H1 (cell line): ENCODE measurements at regions of chr2 and their contacts with region 1.

Region 1: GRCh38 chr2:159226059-159226461 is 60.4 kb downstream of the WDSUB1 start:
- DNase-seq: peak in 1 of 2 experiments; percentile 20
- H3K4me3 ChIP-seq: no peak overlapping the region
- H3K27ac ChIP-seq: no peak overlapping the region
- H3K4me1 ChIP-seq: no peaks in the 10 kb centered on the region
- H3K27me3 ChIP-seq: no peaks in the 10 kb centered on the region; a peak in 1 of 7 replicates
- CTCF ChIP-seq: no peak
- EP300 ChIP-seq: no peak
- POLR2A ChIP-seq: no peak
- RAD21 ChIP-seq: no peak

Region 2: DNA sequence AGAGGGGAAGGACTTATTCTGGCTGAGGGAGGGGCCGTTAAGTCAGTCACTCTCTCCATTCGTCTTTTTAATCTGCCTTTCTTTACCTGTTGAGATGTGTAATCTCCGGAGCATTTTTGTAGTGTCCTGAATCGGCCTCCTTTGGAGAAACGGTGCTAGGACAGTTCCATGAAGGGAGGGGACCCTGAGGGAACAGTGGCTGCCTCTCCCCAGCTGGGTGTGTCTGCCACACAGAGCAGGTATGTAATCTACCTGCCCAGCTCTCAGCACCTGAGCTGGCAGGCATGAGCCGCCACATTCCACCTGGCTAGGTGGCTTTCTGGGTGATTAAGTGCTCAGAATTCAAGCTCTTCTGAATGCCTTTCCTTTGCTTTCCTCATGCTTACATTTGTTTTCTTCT is 70.7 kb before region 1 on chr2:
- CTCF ChIA-PET with region 1: no interaction called
- POLR2A ChIA-PET with region 1: no interaction called
- DNase-seq: peak in 1 of 2 experiments; percentile 31
- H3K4me3 ChIP-seq: no peak overlapping the region
- H3K27ac ChIP-seq: no peak overlapping the region
- H3K4me1 ChIP-seq: peaks cover 0 to 4% (median 1%) of the 10 kb centered on the region in 4 experiments; a peak in 4 of 7 replicates
- H3K27me3 ChIP-seq: no peaks in the 10 kb centered on the region
- CTCF ChIP-seq: no peak
- EP300 ChIP-seq: no peak
- POLR2A ChIP-seq: no peak
- RAD21 ChIP-seq: 0 out of 4 replicates have a peak, but pooled peaks of 1 of the 2 experiments have one; percentile 1

Region 3: GRCh38 chr2:159214321-159214865 is 11.7 kb before region 1 on chr2:
- CTCF ChIA-PET with region 1: interaction called, 19 read pairs
- POLR2A ChIA-PET with region 1: interaction called, 3 read pairs
- DNase-seq: no peak
- H3K4me3 ChIP-seq: no peak overlapping the region
- H3K27ac ChIP-seq: no peak overlapping the region
- H3K4me1 ChIP-seq: peaks cover 4 to 13% (median 8%) of the 10 kb centered on the region in 4 experiments; a peak in 6 of 7 replicates
- H3K27me3 ChIP-seq: peaks cover 25 to 62% (median 55%) of the 10 kb centered on the region in 4 experiments
- CTCF ChIP-seq: no peak
- EP300 ChIP-seq: no peak
- POLR2A ChIP-seq: no peak
- RAD21 ChIP-seq: no peak

Region 4: GRCh38 chr2:159243529-159243928 is 17.5 kb after region 1 on chr2:
- CTCF ChIA-PET with region 1: no interaction called
- POLR2A ChIA-PET with region 1: no interaction called
- DNase-seq: no peak
- H3K4me3 ChIP-seq: no peak overlapping the region
- H3K27ac ChIP-seq: no peak overlapping the region
- H3K4me1 ChIP-seq: no peaks in the 10 kb centered on the region
- H3K27me3 ChIP-seq: peaks cover 0 to 1% (median 0%) of the 10 kb centered on the region in 4 experiments; a peak in 1 of 7 replicates
- CTCF ChIP-seq: no peak
- EP300 ChIP-seq: no peak
- POLR2A ChIP-seq: no peak
- RAD21 ChIP-seq: no peak